Naive thymus-derived CD4-positive, alpha-beta T cell (primary cell): ENCODE measurements at regions of chr9 and their contacts with region 1.

Region 1: DNA sequence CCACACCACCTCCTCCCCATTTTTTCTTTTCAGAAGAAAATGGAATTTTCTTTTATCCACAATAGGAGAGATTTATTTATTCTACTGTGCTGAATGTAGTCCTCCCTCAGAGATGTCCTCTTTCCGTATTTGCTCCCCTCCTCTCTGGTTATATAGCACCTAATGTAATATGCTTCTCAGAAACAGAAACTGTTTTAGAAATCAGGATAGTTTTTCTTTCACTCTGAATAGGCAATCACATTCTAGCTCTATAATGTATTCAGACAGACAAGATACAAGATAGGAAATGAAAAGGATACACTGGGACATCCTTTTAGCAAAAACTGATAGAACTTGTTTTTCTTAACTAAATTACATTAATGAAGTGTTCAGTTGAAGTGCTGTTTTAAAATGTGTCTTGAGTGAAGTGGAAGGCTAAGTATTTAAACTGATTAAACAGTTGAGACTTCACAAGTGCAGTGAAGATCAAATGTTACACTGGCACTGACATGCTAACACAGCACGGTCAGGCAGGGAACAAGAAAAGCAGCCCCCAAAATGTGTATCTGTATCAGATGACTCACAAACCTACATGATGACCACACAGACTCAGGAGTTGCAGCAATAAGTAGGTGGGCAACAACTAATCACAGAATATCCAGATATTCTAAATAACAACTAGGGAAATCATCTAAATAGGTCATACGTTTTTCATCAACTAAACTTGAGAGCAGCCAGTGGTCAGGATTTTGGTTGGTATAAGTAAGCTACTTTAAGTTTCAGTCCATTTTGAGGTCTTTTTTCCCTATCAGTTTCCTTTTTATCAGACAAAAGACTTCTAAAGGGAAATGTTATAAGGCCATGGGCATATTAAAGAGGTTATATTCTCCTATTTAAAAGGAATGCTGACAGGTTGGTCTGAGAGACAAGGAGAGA is 260.4 kb downstream of the MLLT3 start:
- DNase-seq: peak in 2 of 9 donors; percentile 18 to 23
- ATAC-seq: peak; percentile 58
- H3K4me3 ChIP-seq: no peak overlapping the region
- H3K4me3 Mint-ChIP-seq: peak overlapping the region; percentile 11 to 76 (median 67)
- H3K27ac ChIP-seq: peak overlapping the region; percentile 45
- H3K27ac Mint-ChIP-seq: peak overlapping the region; percentile 65 to 94 (median 86)
- H3K4me1 ChIP-seq: peaks cover 0 to 31% of the 10 kb centered on the region in 2 donors
- H3K4me1 Mint-ChIP-seq: peaks cover 28 to 91% (median 65%) of the 10 kb centered on the region in 7 donors
- H3K27me3 ChIP-seq: no peaks in the 10 kb centered on the region
- H3K27me3 Mint-ChIP-seq: no peaks in the 10 kb centered on the region

Region 2: GRCh38 chr9:20373263-20373662 is 11.3 kb after region 1 on chr9:
- CTCF ChIA-PET with region 1: interaction called, 9 read pairs
- POLR2A ChIA-PET with region 1: interaction called, 5 read pairs
- intact Hi-C with region 1: loop called in 1 of 2 experiments (anchors 1 kb)
- DNase-seq: peak in 4 of 9 donors; percentile 27 to 36 (median 30)
- ATAC-seq: peak; percentile 46
- H3K4me3 ChIP-seq: no peak overlapping the region
- H3K4me3 Mint-ChIP-seq: peak overlapping the region in 7 of 10 donors; percentile 30 to 66 (median 46)
- H3K27ac ChIP-seq: peak overlapping the region; percentile 6
- H3K27ac Mint-ChIP-seq: peak overlapping the region; percentile 33 to 84 (median 70)
- H3K4me1 ChIP-seq: peaks cover 0 to 61% of the 10 kb centered on the region in 2 donors
- H3K4me1 Mint-ChIP-seq: peaks cover 37 to 97% (median 92%) of the 10 kb centered on the region in 7 donors
- H3K27me3 ChIP-seq: no peaks in the 10 kb centered on the region
- H3K27me3 Mint-ChIP-seq: no peaks in the 10 kb centered on the region

Region 3: GRCh38 chr9:20382460-20383071 is 20.7 kb after region 1 on chr9:
- CTCF ChIA-PET with region 1: interaction called, 3 read pairs
- POLR2A ChIA-PET with region 1: no interaction called
- intact Hi-C with region 1: loop called in 1 of 2 experiments (anchors 2 kb)
- DNase-seq: no peak
- ATAC-seq: peak; percentile 34
- H3K4me3 ChIP-seq: no peak overlapping the region
- H3K4me3 Mint-ChIP-seq: peak overlapping the region in 7 of 10 donors; percentile 0 to 59 (median 19)
- H3K27ac ChIP-seq: peak overlapping the region; percentile 10
- H3K27ac Mint-ChIP-seq: peak overlapping the region in 8 of 9 donors; percentile 1 to 84 (median 17)
- H3K4me1 ChIP-seq: peaks cover 3 to 18% of the 10 kb centered on the region in 2 donors
- H3K4me1 Mint-ChIP-seq: peaks cover 27 to 86% (median 69%) of the 10 kb centered on the region in 7 donors
- H3K27me3 ChIP-seq: no peaks in the 10 kb centered on the region
- H3K27me3 Mint-ChIP-seq: no peaks in the 10 kb centered on the region